ENCODE measurements at regions of chr18 and their contacts with region 1.

Region 1: GRCh38 chr18:23131693-23132319 is 3.5 kb upstream of the CABLES1 start:
- DNase-seq: peak in 4 of 5 donors; percentile 51 to 78 (median 66)
- H3K4me3 ChIP-seq: no peak overlapping the region
- H3K27ac ChIP-seq: no peak overlapping the region
- H3K4me1 ChIP-seq: no peaks in the 10 kb centered on the region
- H3K27me3 ChIP-seq: no peaks in the 10 kb centered on the region
- CTCF ChIP-seq: peak; percentile 69 to 82 (median 75)
- EP300 ChIP-seq: no peak
- POLR2A ChIP-seq: no peak

Region 2: DNA sequence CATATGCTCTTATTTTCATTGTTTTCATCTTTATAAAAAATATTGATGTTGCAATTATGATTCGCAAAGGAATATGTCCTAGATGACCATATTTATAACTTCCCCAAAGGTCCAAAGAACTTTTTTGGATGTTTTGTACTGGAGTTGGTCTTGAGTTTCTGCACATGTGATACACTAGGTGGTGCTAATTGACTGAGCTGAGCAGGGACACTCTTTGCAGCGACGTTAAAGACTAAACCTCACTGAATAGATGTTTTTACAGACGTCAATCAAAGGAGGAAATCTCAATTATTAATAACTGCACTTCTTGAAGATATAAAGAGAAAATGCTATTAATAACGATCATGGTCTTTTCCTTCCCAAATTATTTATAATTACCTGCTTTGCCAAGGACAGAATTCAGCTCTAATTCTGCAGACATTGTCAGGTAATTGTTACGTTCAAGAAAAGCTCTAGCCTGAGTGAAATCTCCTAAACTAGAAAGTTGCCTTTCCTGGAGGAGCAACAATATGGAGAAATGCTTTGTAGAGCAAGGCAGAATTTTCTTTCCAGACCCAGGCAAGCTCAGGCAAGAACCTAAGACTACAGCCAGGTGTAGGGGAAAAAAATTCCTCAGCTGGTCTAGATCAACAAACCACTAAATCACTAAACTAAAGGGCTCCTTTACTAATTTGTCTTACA is 318.0 kb before region 1 on chr18:
- intact Hi-C with region 1: no loop called
- DNase-seq: no peak
- H3K4me3 ChIP-seq: no peak overlapping the region
- H3K27ac ChIP-seq: no peak overlapping the region
- H3K4me1 ChIP-seq: no peaks in the 10 kb centered on the region
- H3K27me3 ChIP-seq: no peaks in the 10 kb centered on the region
- CTCF ChIP-seq: no peak
- EP300 ChIP-seq: no peak
- POLR2A ChIP-seq: no peak

Region 3: DNA sequence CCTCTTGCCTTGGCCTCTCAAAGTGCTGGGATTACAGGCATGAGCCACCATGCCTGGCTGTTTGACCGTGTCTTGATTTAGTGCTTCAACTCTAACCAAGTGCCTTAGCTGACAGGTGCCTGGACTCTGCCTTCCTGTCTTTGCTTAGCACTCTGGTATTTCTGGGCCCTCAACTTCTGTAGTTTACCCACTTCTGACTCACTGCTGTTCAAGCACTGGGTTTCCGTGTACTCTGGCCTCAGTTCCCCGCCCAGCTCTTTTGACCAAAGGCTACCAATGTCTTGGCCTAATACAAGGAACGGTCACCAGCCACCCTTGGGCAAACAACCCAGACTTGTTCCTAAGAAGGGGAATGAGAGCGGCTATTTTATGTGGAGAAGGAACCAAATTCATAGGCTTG is 32.2 kb before region 1 on chr18:
- intact Hi-C with region 1: no loop called
- DNase-seq: no peak
- H3K4me3 ChIP-seq: no peak overlapping the region
- H3K27ac ChIP-seq: no peak overlapping the region
- H3K4me1 ChIP-seq: no peaks in the 10 kb centered on the region
- H3K27me3 ChIP-seq: no peaks in the 10 kb centered on the region
- CTCF ChIP-seq: no peak
- EP300 ChIP-seq: no peak
- POLR2A ChIP-seq: no peak

Region 4: DNA sequence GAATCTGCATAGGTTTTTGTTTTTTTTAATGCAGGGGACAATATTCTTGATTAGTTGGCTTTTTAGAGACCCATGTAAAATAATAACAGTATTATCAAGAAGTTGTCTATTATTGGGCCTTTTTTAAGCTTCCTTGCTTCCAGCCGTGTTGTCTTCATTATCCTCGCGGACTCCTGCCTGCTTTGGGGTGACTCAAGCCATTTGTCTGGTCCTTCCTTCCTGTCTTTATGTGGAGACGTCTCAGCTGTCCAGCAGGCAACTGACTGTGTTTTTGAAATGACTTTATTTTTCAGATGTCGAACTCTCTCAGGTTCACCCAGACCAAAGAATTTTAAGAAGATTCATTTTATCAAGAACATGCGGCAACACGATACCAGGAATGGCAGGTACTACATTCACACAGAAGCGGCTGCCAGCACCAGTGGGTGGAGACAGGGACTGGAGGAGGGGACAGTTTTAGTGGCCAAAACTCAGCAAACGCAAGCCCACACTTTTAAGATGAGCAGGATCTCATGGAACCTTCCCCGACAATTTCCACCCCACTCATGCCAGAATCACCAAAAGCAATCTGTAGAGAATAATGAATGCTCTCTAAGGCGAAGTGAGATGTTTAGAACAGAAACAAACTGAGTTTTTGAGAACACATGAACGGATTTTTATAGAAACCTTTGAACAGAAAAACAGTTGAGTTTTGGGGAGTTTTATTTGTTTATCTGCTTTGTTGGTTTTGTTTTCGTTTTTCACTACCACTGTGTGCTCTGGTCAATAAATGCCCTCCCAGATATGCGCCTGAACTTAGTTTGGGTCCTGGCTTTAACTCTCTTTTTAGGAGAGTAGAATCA is 62.6 kb after region 1 on chr18:
- intact Hi-C with region 1: no loop called
- DNase-seq: no peak
- H3K4me3 ChIP-seq: no peak overlapping the region
- H3K27ac ChIP-seq: peak overlapping the region in 1 of 2 donors; percentile 36
- H3K4me1 ChIP-seq: peaks cover 3% of the 10 kb centered on the region
- H3K27me3 ChIP-seq: no peaks in the 10 kb centered on the region
- CTCF ChIP-seq: no peak
- EP300 ChIP-seq: no peak
- POLR2A ChIP-seq: no peak

Region 5: GRCh38 chr18:23228102-23229061 is 96.6 kb after region 1 on chr18:
- intact Hi-C with region 1: loop called in 1 of 4 experiments (anchors 10 kb)
- DNase-seq: peak in 2 of 5 donors; percentile 27 to 63
- H3K4me3 ChIP-seq: no peak overlapping the region
- H3K27ac ChIP-seq: peak overlapping the region; percentile 53 to 92
- H3K4me1 ChIP-seq: peaks cover 26% of the 10 kb centered on the region
- H3K27me3 ChIP-seq: no peaks in the 10 kb centered on the region
- CTCF ChIP-seq: no peak
- EP300 ChIP-seq: no peak
- POLR2A ChIP-seq: no peak

Region 6: DNA sequence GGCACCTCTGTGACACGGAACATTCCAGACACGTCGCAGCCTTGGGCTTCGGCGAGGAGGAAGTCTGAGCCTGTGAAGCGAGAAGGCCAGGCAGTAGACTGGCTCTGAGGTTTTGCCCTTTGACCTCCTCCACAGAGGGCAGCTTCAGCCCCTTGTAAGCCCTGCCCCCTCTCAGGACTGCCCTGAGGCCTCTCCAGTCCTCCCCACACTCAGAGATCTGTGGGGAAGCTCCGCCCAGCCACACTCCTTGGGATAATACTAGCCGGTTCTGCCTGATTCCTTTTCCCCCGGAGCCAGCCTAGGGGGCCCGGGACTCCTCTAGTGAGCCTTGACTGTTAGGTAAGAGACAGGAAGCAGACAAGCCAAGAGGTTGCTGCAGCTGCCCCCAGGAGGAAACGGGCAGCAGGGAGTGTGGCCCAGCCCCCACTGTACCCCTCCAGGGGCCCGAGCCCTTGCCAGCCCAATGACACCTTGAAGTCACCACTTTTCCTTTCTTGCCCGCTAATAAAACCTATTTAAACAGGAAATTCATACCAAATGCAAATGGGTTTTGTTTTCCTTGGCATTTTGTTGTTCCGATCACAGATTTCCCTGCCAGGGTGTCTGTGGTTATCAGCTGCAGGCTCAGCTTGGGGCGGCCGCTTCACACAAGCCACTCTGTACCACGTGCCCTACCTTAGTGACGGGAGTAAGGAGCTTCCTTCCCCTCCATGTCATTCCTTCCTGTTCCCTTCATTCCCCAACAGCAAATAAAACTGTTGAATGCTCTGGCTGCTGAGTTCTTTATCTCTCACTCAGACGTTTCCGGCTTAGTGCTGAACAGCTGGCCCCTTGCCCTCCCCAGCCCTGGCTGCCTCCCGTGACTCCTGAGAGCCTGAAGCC is 128.1 kb after region 1 on chr18:
- intact Hi-C with region 1: loop called in 1 of 4 experiments (anchors 10 kb)
- DNase-seq: peak; percentile 71 to 82 (median 76)
- H3K4me3 ChIP-seq: peak overlapping the region; percentile 26
- H3K27ac ChIP-seq: peak overlapping the region; percentile 73 to 78
- H3K4me1 ChIP-seq: peaks cover 12% of the 10 kb centered on the region
- H3K27me3 ChIP-seq: no peaks in the 10 kb centered on the region
- CTCF ChIP-seq: no peak
- EP300 ChIP-seq: no peak
- POLR2A ChIP-seq: no peak

Region 7: GRCh38 chr18:23356915-23357601 is 225.3 kb after region 1 on chr18:
- intact Hi-C with region 1: loop called in 1 of 4 experiments (anchors 5 kb)
- DNase-seq: peak in 1 of 5 donors; percentile 10
- H3K4me3 ChIP-seq: no peak overlapping the region
- H3K27ac ChIP-seq: no peak overlapping the region
- H3K4me1 ChIP-seq: peaks cover 8% of the 10 kb centered on the region
- H3K27me3 ChIP-seq: no peaks in the 10 kb centered on the region
- CTCF ChIP-seq: no peak
- EP300 ChIP-seq: no peak
- POLR2A ChIP-seq: no peak

Region 8: DNA sequence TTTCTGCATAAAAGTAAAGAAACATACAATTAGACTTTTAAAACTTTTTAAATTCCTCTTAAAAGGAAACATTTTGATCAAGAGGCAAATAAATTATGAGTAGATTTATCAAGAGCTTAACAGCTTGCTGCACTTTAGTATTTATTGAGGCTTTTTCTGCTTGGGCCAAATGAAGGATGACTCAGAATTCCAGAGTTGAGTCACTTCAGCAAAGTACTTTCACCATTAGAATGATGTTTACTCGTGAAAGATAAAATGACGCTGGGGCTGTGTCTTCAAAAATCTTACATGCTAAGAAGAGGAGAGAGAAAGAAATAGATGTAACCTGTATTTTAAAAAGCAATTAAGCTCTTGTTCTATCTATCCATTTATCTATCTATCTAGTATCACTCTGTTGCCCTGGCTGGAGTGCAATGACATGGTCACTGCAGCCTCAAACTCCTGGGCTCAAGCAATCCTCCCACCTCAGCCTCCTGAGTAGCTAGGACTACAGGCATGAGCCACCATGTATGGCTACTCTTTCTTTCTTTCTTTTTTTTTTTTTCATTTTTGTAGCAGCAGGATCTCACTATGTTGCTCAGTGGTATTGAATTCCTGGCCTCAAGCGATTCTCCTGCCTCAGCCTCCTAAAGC is 246.0 kb after region 1 on chr18:
- intact Hi-C with region 1: loop called in 2 of 4 experiments (anchors 5 to 10 kb)
- DNase-seq: peak in 1 of 5 donors; percentile 24
- H3K4me3 ChIP-seq: no peak overlapping the region
- H3K27ac ChIP-seq: peak overlapping the region in 1 of 2 donors; percentile 65
- H3K4me1 ChIP-seq: peaks cover 7% of the 10 kb centered on the region
- H3K27me3 ChIP-seq: no peaks in the 10 kb centered on the region
- CTCF ChIP-seq: no peak
- EP300 ChIP-seq: no peak
- POLR2A ChIP-seq: no peak

Region 9: GRCh38 chr18:23401400-23402347 is 269.9 kb after region 1 on chr18:
- intact Hi-C with region 1: loop called in 1 of 4 experiments (anchors 10 kb)
- DNase-seq: peak in 4 of 5 donors; percentile 25 to 68 (median 28)
- H3K4me3 ChIP-seq: no peak overlapping the region
- H3K27ac ChIP-seq: no peak overlapping the region
- H3K4me1 ChIP-seq: peaks cover 8% of the 10 kb centered on the region
- H3K27me3 ChIP-seq: no peaks in the 10 kb centered on the region
- CTCF ChIP-seq: no peak
- EP300 ChIP-seq: no peak
- POLR2A ChIP-seq: no peak

Region 10: DNA sequence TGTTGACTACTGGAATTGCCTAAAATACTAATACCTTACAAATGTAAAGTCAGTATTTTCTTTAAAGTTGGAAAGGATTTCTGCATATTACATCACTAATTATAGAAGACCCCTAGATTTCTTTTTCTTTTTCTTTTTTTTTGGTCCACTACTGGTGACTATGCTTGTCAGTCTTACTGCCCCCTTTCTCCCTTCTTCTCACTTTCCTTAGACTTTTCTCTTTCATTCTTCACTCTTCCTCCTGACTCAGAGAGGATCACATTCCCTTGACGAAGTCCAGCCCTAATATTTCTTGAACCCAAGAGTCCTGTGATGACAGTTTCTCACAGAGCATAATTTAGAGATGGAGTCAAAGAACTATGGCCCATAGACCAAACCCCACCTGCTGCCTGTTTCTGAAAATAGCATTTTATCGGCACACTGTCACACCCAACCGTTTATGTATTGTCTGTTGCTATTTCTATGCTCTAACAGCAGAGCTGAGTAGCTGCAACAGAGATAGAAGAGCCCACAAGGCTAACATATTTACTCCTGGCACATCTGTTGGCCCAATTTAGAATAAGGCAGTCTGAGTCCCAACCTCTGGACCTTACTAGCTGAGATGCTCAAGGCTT is 280.7 kb after region 1 on chr18:
- intact Hi-C with region 1: loop called in 3 of 4 experiments (anchors 2 to 10 kb)
- DNase-seq: no peak
- H3K4me3 ChIP-seq: no peak overlapping the region
- H3K27ac ChIP-seq: no peak overlapping the region
- H3K4me1 ChIP-seq: no peaks in the 10 kb centered on the region
- H3K27me3 ChIP-seq: no peaks in the 10 kb centered on the region
- CTCF ChIP-seq: no peak
- EP300 ChIP-seq: no peak
- POLR2A ChIP-seq: no peak

Region 11: DNA sequence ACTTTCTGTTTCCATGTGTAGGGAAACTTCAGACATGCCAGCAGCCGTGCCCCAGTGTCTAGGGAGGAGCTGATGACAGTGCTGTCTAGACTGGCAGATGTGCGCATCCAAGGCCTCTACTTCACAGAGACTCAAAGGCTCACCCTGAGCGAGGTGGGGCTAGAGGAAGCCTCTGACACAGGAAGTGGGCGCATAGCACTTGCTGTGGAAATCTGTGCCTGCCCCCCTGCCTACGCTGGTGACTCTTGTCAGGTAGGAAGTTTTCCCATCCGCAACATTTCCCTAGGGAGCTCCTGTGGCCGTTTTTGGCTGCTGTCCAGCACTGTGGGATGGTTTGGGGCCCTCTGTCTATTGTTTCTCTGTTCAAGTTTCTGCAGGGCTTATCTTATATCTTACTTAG is 739.6 kb after region 1 on chr18:
- intact Hi-C with region 1: no loop called
- DNase-seq: no peak
- H3K4me3 ChIP-seq: no peak overlapping the region
- H3K27ac ChIP-seq: no peak overlapping the region
- H3K4me1 ChIP-seq: no peaks in the 10 kb centered on the region
- H3K27me3 ChIP-seq: no peaks in the 10 kb centered on the region
- CTCF ChIP-seq: no peak
- EP300 ChIP-seq: no peak
- POLR2A ChIP-seq: no peak

Measured in ovary (tissue), 10 donors.